Activated CD8-positive, alpha-beta T cell treated with anti-CD3 and anti-CD28 coated beads, Interleukin-2, amount 10 ng/mL, durations not matched to agents 7 days and 5 days (primary cell): ENCODE measurements at regions of chr21 and their contacts with region 1.

Region 1: DNA sequence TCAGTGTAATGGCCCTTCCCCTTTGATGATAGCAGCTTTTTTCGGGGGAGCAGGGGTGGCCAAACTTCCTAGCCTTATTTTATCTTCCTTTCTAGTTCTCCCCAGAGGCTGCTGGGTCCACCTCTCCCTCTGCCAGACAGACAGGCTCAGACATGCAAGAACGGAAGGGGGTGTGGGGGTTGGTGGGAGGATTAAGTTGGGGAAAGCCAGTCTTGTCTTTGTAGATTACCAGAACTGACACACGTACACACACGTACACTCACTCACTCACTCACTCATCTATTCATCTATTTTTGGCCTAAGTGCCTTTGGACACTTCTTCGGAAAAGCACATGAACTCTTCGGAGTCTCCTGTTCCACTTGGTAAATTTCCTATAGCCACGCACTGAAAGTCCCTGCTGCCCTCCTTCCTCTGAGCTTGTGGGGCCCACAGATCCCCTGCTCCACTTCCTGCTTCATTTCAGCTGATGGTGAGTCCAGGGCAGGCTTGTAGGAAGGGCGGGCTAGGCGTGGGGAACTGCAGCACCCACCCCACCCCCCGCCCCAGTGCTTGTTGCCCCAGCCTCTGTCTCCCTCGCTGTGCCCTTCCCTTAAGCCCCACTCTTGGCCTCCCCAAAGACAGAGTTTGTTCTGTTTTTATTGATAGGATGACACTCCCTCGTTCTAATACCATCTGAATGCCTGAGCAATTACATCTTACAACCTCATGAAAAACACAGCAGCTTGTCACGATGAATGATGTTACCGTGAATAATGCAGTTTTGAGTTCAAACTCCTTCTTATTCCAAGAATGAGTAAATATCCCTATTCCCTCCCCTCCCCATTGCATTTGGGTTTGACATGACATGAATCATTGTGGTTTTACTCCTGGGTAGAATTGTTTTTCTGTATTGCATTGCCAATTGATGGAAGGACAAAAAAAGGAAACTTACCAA is 60.7 kb upstream of the ATP5PO start:
- DNase-seq: peak; percentile 66
- ATAC-seq: peak; percentile 57
- H3K4me3 Mint-ChIP-seq: peak overlapping the region; percentile 54
- H3K27ac Mint-ChIP-seq: peak overlapping the region; percentile 95
- H3K4me1 Mint-ChIP-seq: peaks cover 73% of the 10 kb centered on the region
- H3K27me3 Mint-ChIP-seq: no peaks in the 10 kb centered on the region

Region 2: DNA sequence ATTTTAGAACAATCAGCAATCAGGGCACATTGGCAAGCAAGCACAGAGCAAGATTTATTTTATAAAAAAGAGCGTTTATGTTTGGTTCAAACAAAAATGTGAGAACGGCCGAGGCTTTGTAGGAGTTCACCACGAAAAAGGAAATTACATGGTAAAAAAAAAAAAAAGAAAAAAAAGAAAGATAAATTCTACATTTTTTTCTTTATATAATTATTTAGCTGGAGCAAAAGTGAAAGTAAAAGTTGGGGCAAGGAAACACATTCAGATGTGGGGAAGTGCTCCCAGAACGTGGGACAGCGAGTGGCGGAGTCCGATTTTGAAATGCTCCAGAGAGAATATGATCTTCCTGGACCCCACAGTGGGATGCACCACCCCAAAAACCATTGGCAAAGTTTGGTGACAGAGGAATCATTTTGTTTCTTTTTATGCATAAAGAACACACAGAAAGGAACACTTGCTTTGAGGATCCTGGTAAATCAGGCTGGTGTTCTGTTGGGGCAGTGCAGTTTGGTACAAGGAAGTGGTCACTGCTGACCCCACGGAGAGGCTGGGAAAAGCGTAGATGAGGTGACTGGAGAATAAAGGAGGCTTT is 44.5 kb before region 1 on chr21:
- CTCF ChIA-PET with region 1: interaction called, 6 read pairs
- POLR2A ChIA-PET with region 1: interaction called, 11 read pairs
- DNase-seq: no peak
- ATAC-seq: peak; percentile 44
- H3K4me3 Mint-ChIP-seq: peak overlapping the region; percentile 92
- H3K27ac Mint-ChIP-seq: peak overlapping the region; percentile 98
- H3K4me1 Mint-ChIP-seq: peaks cover 43% of the 10 kb centered on the region
- H3K27me3 Mint-ChIP-seq: no peaks in the 10 kb centered on the region

Region 3: DNA sequence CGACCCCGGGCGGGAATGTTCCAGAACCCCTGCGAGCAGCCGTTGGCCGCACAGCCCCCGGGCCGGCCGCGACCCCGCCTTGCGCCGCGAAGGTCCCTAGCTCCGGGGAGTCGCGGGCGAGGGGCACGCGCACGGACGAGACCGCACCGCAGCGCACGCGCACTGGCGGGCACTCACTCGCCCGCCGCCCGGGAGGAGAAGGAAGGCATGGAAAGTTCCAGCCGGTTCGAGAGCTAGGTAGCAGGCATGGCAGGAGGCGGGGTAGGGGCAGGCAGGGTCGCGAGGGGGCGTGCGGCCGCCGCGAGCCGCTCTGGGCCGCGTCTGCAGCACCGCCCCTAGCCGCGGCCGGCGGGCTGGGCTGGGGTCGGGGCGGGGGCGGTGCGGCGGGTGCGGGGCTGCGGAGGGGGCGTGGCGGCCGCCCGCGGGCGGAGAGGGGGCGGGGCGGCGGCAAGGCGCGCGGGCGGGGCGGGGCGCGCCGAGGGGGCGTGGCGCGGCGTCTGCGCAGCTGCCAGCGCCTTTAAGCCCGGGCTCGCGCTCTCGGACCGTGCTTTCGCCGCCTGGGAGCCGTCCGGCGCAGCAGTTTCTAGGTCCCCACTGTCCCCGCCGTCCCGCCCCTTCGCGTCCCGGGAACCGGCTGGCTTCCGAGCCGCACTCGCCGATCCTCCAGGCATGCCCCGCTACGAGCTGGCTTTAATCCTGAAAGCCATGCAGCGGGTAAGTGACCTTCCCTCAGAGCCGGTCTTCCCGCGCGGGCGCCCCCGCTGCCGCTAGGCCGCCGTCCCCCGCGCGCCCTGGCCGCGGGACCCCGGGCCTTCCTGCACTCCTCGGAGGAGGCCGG is 96.9 kb after region 1 on chr21 and contains the starts of genes MRPS6 and SLC5A3:
- CTCF ChIA-PET with region 1: interaction called, 4 read pairs
- POLR2A ChIA-PET with region 1: interaction called, 10 read pairs
- DNase-seq: peak; percentile 75
- ATAC-seq: peak; percentile 72
- H3K4me3 Mint-ChIP-seq: peak within 1 kb of the TSS; percentile 92
- H3K27ac Mint-ChIP-seq: peak within 1 kb of the TSS; percentile 75
- H3K4me1 Mint-ChIP-seq: peaks cover 45% of the 10 kb centered on the region
- H3K27me3 Mint-ChIP-seq: peaks cover 4% of the 10 kb centered on the region
- total RNA-seq, gene MRPS6: 80.2 to 84.3 TPM
- total RNA-seq, gene SLC5A3: 22.4 to 24.2 TPM